ENCODE measurements at regions of chr13 and their contacts with region 1.

Region 1: GRCh38 chr13:60351326-60351725 is 45.7 kb upstream of the TDRD3 start:
- DNase-seq: no peak
- H3K4me3 ChIP-seq: no peak overlapping the region
- H3K27ac ChIP-seq: no peak overlapping the region
- H3K4me1 ChIP-seq: no peaks in the 10 kb centered on the region
- H3K27me3 ChIP-seq: no peaks in the 10 kb centered on the region
- CTCF ChIP-seq: no peak
- EP300 ChIP-seq: no peak
- POLR2A ChIP-seq: no peak
- RAD21 ChIP-seq: no peak

Region 2: DNA sequence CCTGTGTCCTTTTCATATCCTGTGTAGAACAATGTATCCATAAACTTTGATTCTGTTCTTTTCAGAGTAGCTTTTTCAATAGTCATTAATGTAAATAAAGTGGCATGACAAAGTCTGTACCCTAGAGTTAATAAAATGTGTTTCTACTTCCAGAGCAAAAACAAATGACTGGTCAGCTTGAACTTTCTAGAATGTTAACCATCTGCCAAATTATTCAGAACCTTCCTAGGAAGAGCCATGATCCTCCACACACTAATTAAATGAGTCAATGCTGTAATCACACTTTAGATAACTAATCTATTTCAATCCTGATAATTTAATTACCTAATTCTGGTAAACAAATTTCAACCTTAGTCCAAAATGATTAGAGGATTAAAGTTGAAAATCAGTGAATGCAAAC is 260.8 kb before region 1 on chr13:
- CTCF ChIA-PET with region 1: no interaction called
- POLR2A ChIA-PET with region 1: no interaction called
- DNase-seq: no peak
- H3K4me3 ChIP-seq: no peak overlapping the region
- H3K27ac ChIP-seq: no peak overlapping the region
- H3K4me1 ChIP-seq: no peaks in the 10 kb centered on the region
- H3K27me3 ChIP-seq: no peaks in the 10 kb centered on the region
- CTCF ChIP-seq: no peak
- EP300 ChIP-seq: no peak
- POLR2A ChIP-seq: no peak
- RAD21 ChIP-seq: no peak

Region 3: GRCh38 chr13:60335531-60335930 is 15.8 kb before region 1 on chr13:
- CTCF ChIA-PET with region 1: interaction called, 12 read pairs
- POLR2A ChIA-PET with region 1: no interaction called
- DNase-seq: no peak
- H3K4me3 ChIP-seq: no peak overlapping the region
- H3K27ac ChIP-seq: no peak overlapping the region
- H3K4me1 ChIP-seq: peaks cover 0 to 7% (median 0%) of the 10 kb centered on the region in 4 experiments; a peak in 1 of 7 replicates
- H3K27me3 ChIP-seq: no peaks in the 10 kb centered on the region
- CTCF ChIP-seq: peak in 1 of 3 experiments; percentile 35; a peak in 1 of 4 replicates
- EP300 ChIP-seq: no peak
- POLR2A ChIP-seq: no peak
- RAD21 ChIP-seq: peak in 1 of 2 experiments; percentile 55